Heart left ventricle (tissue), 16 donors: ENCODE measurements at regions of chr3 and their contacts with region 1.

Region 1: DNA sequence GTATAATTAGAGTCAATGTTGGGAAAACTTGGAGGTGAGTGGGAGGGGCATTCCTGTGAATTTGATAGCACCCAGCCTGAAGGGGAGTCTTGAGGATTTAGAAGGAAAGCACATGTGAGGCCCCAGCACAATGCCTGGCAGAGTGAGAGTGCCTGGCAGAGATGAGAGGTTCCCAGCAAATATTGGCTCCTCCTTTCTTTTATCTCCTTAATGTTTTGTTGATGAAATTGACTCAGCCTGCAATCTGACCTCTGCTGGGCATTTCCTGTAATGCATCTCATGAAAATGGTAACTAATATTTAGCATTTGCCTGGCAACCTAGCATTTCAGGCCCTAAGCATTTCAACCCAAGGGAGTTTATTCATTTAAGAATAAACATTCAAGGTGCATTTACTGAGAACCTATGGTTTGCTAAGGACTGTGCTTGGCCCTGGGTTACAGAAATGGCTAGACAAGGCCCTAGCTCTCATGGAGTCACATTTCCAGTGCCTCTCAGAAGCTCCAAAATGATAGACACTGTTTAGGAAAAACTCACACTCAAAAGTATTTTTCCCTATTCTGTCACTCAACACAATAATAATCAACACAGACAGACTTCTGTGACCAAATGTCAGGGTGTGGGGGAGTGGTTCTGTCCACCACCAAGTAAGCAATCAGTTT is 19.0 kb downstream of the PDHB start:
- DNase-seq: peak in 3 of 5 donors; percentile 32 to 66 (median 44)
- ATAC-seq: peak; percentile 54 to 74 (median 69)
- H3K4me3 ChIP-seq: no peak overlapping the region
- H3K27ac ChIP-seq: peak overlapping the region in 3 of 12 donors; percentile 7 to 50 (median 43)
- H3K4me1 ChIP-seq: peaks cover 0 to 28% (median 8%) of the 10 kb centered on the region in 12 donors
- H3K27me3 ChIP-seq: no peaks in the 10 kb centered on the region
- CTCF ChIP-seq: peak; percentile 69 to 85 (median 79)
- POLR2A ChIP-seq: no peak

Region 2: GRCh38 chr3:58188173-58188564 is 226.5 kb before region 1 on chr3:
- intact Hi-C with region 1: loop called in 5 of 10 experiments (anchors 5 to 10 kb)
- DNase-seq: no peak
- ATAC-seq: no peak
- H3K4me3 ChIP-seq: no peak overlapping the region
- H3K27ac ChIP-seq: peak overlapping the region in 1 of 12 donors; percentile 44
- H3K4me1 ChIP-seq: peaks cover 0 to 20% (median 13%) of the 10 kb centered on the region in 12 donors
- H3K27me3 ChIP-seq: no peaks in the 10 kb centered on the region
- CTCF ChIP-seq: no peak
- POLR2A ChIP-seq: no peak

Region 3: GRCh38 chr3:58324391-58325390 is 90.0 kb before region 1 on chr3:
- intact Hi-C with region 1: loop called in 6 of 10 experiments (anchors 1 to 5 kb)
- DNase-seq: no peak
- ATAC-seq: peak in 1 of 4 donors; percentile 12
- H3K4me3 ChIP-seq: no peak overlapping the region
- H3K27ac ChIP-seq: peak overlapping the region in 8 of 12 donors; percentile 0 to 67 (median 23)
- H3K4me1 ChIP-seq: peaks cover 0 to 23% (median 10%) of the 10 kb centered on the region in 12 donors
- H3K27me3 ChIP-seq: no peaks in the 10 kb centered on the region
- CTCF ChIP-seq: no peak
- POLR2A ChIP-seq: no peak

Region 4: GRCh38 chr3:58332575-58333188 is 82.0 kb before region 1 on chr3 and contains the start of gene PXK:
- intact Hi-C with region 1: loop called in 7 of 10 experiments (anchors 2 to 5 kb)
- DNase-seq: peak; percentile 84 to 92 (median 88)
- ATAC-seq: peak; percentile 78 to 97 (median 94)
- H3K4me3 ChIP-seq: peak within 1 kb of the TSS; percentile 57 to 98 (median 78)
- H3K27ac ChIP-seq: peak within 1 kb of the TSS; percentile 10 to 74 (median 63)
- H3K4me1 ChIP-seq: peaks cover 0 to 55% (median 20%) of the 10 kb centered on the region in 12 donors
- H3K27me3 ChIP-seq: no peaks in the 10 kb centered on the region
- CTCF ChIP-seq: peak in 4 of 12 donors; percentile 9 to 32 (median 18)
- POLR2A ChIP-seq: peak in 1 of 2 donors; percentile 61
- total RNA-seq, gene PXK: 8.2 to 24.3 (median 13.6) TPM

Region 5: GRCh38 chr3:58666683-58667082 is 252.0 kb after region 1 on chr3 and contains the start of gene FAM3D:
- intact Hi-C with region 1: no loop called
- DNase-seq: peak in 1 of 5 donors; percentile 17
- ATAC-seq: peak in 3 of 4 donors; percentile 77 to 83 (median 79)
- H3K4me3 ChIP-seq: no peak within 1 kb of the TSS
- H3K27ac ChIP-seq: peak within 1 kb of the TSS in 1 of 12 donors; percentile 27
- H3K4me1 ChIP-seq: peaks cover 0 to 4% (median 0%) of the 10 kb centered on the region in 12 donors
- H3K27me3 ChIP-seq: no peaks in the 10 kb centered on the region
- CTCF ChIP-seq: no peak
- POLR2A ChIP-seq: no peak
- total RNA-seq, gene FAM3D: not detected